Ovary (tissue), 10 donors: ENCODE measurements at regions of chr17 and their contacts with region 1.

Region 1: GRCh38 chr17:50200457-50201275 is 765 bp downstream of the COL1A1 start:
- DNase-seq: peak; percentile 94 to 98 (median 96)
- H3K4me3 ChIP-seq: peak overlapping the region; percentile 70
- H3K27ac ChIP-seq: peak overlapping the region; percentile 82 to 95
- H3K4me1 ChIP-seq: peaks cover 20% of the 10 kb centered on the region
- H3K27me3 ChIP-seq: no peaks in the 10 kb centered on the region
- CTCF ChIP-seq: peak; percentile 99 to 100 (median 100)
- EP300 ChIP-seq: no peak
- POLR2A ChIP-seq: peak; percentile 38

Region 2: DNA sequence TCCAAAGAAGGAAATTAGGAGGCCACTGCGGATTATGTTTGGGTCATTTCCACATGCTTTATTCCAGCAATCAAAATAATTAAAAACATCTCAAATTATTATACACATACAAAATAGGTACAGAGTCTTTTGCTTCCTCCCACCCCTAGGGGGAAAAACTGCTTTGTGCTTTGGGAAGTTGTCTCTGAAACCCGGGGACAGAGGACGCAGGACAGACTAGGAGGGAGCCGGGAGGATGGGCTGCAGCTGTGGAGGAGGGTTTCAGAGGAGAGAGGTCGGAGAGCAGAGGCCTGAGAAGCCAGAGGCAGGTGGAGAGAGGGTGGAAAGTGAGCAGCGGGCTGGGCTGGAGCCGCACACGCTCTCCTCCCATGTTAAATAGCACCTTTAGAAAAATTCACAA is 16.6 kb before region 1 on chr17:
- intact Hi-C with region 1: loop called in 2 of 4 experiments (anchors 2 kb)
- DNase-seq: no peak
- H3K4me3 ChIP-seq: no peak overlapping the region
- H3K27ac ChIP-seq: peak overlapping the region; percentile 52 to 55
- H3K4me1 ChIP-seq: peaks cover 2% of the 10 kb centered on the region
- H3K27me3 ChIP-seq: no peaks in the 10 kb centered on the region
- CTCF ChIP-seq: peak in 1 of 3 donors; percentile 33
- EP300 ChIP-seq: no peak
- POLR2A ChIP-seq: no peak